ENCODE measurements at regions of chr14 and their contacts with region 1.

Region 1: DNA sequence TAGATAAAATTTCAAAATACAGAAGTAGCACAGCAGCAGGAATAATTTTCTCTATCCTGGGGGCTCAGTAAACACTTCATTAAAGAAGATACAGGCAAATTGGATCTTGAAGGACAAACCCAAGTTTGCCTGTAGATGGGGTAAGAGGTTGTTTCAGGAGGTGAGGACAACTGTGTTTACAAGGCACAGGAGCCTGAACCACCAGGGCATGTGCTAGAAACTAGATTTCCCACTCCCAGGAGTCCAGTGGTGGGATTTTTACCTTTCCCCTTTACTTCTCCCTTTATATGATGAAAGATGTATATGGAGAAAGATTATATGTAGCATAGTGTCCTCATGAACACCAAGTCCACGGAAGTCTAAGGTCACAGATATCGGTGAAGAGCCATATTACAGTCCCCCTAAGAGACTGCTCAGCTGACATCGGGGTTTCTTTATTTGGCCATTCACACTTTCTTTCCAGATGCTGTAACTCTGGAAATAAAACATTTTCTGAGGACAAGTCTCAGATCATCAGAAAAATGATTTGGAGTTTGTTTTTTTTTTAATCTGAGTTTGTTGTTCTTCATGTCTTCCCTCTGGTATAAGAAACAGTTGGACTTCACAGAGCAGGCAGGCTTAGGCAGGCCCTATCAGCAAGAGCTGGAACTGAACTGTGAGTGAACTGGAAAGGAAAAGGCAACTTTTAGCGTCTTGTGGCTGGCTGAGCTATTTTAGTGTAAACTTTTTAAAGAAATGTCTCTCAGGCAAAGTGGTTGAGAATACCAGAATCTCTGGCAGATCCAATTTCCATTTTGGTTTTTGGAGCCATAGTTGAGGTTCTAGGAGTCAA is 8.0 kb upstream of the EVL start:
- DNase-seq: peak; percentile 43
- ATAC-seq: peak; percentile 80
- H3K4me3 ChIP-seq: no peak overlapping the region
- H3K27ac ChIP-seq: no peak overlapping the region
- H3K4me1 ChIP-seq: 0 out of 2 replicates have a peak, but pooled peaks cover 2% of the 10 kb centered on the region
- H3K27me3 ChIP-seq: no peaks in the 10 kb centered on the region
- CTCF ChIP-seq: peak; percentile 36
- POLR2A ChIP-seq: no peak
- RAD21 ChIP-seq: peak; percentile 41

Region 2: GRCh38 chr14:100096570-100096971 is 39.4 kb after region 1 on chr14:
- CTCF ChIA-PET with region 1: no interaction called
- POLR2A ChIA-PET with region 1: no interaction called
- dilution Hi-C with region 1: no loop called
- in situ Hi-C with region 1: no loop called
- intact Hi-C with region 1: loop called (anchors 5 kb)
- DNase-seq: peak; percentile 68
- ATAC-seq: peak; percentile 81
- H3K4me3 ChIP-seq: no peak overlapping the region
- H3K27ac ChIP-seq: no peak overlapping the region
- H3K4me1 ChIP-seq: peaks cover 10% of the 10 kb centered on the region
- H3K27me3 ChIP-seq: no peaks in the 10 kb centered on the region
- CTCF ChIP-seq: no peak
- POLR2A ChIP-seq: no peak
- RAD21 ChIP-seq: no peak

Measured in IMR-90 (cell line).